Left ventricle myocardium inferior (tissue), 1 donor: ENCODE measurements at regions of chr1 and their contacts with region 1.

Region 1: GRCh38 chr1:209989525-209989924 is 51.5 kb downstream of the SYT14 start:
- DNase-seq: no peak
- H3K4me3 ChIP-seq: no peak overlapping the region
- H3K27ac ChIP-seq: no peak overlapping the region
- H3K4me1 ChIP-seq: no peaks in the 10 kb centered on the region
- H3K27me3 ChIP-seq: peaks cover 49% of the 10 kb centered on the region
- CTCF ChIP-seq: peak; percentile 49

Region 2: GRCh38 chr1:209398313-209398991 is 591.1 kb before region 1 on chr1:
- intact Hi-C with region 1: no loop called
- DNase-seq: no peak
- H3K4me3 ChIP-seq: no peak overlapping the region
- H3K27ac ChIP-seq: no peak overlapping the region
- H3K4me1 ChIP-seq: no peaks in the 10 kb centered on the region
- H3K27me3 ChIP-seq: peaks cover 51% of the 10 kb centered on the region
- CTCF ChIP-seq: no peak

Region 3: GRCh38 chr1:209860293-209860881 is 129.1 kb before region 1 on chr1:
- intact Hi-C with region 1: loop called (anchors 10 kb)
- DNase-seq: peak; percentile 66
- H3K4me3 ChIP-seq: no peak overlapping the region
- H3K27ac ChIP-seq: no peak overlapping the region
- H3K4me1 ChIP-seq: no peaks in the 10 kb centered on the region
- H3K27me3 ChIP-seq: peaks cover 43% of the 10 kb centered on the region
- CTCF ChIP-seq: peak; percentile 91

Region 4: DNA sequence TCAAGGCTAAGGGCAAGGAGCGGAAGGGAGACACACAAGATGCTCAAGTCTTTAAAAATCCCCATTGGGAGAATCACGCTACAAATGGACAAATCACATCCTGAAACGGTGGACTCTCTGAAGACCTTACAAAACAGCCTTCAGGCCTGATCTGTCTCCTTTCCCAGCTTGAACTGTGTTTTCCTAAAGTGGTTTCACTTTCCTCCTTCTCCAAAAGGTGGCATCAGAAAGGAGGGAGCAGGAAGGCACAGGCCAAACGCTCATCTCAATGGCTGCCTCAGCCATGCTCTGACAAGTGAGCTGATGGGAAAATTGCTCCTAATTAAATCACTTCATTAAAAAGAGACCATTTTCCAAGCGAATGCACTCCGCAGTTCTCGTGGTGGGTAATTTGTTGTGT is 114.0 kb before region 1 on chr1:
- intact Hi-C with region 1: no loop called
- DNase-seq: no peak
- H3K4me3 ChIP-seq: no peak overlapping the region
- H3K27ac ChIP-seq: no peak overlapping the region
- H3K4me1 ChIP-seq: no peaks in the 10 kb centered on the region
- H3K27me3 ChIP-seq: peaks cover 70% of the 10 kb centered on the region
- CTCF ChIP-seq: peak; percentile 21